GM12878 (cell line): ENCODE measurements at regions of chr20 and their contacts with region 1.

Region 1: DNA sequence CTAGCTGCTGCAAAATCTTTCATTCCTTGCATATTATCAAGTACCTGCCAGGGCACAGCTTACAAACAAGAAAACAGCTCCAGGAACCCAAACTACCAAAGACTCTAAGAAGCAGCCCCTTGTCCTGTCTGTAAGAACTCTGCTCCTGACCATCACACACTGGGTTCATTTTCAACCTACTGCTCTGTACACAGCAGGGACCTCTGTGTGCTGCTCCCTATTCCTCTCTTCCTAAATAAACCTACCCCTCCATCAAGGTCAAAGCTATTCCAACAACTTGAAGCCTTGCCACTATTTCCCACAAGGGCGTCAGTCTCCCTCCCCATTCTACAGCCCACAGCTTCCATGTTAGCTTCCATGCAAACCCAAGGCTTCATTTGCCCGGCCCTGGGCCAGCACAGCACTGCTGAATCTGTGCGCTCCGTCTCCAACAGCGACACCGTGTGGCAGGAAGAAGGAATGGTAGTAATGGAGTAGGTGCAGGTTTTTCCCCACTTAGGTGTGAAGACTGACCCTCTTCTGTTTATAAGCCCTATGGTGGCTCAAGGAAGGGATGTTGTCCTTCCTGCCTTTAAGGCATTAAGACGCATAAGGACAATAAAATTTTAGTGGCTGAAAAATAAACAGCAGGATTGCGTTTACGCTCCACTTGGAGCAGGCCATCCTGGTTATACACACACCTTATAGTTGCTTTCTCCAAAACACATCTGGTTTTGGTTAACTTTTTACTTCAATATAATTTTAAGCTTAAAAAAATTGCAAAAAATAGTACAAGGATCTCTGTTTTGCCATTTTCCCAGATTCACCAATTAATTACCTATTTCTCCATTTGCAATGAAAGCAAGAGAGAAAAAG is 115.2 kb upstream of the NXT1 start:
- DNase-seq: no peak
- ATAC-seq: peak; percentile 94
- H3K4me3 ChIP-seq: no peak overlapping the region
- H3K27ac ChIP-seq: no peak overlapping the region
- H3K4me1 ChIP-seq: no peaks in the 10 kb centered on the region
- H3K27me3 ChIP-seq: no peaks in the 10 kb centered on the region
- CTCF ChIP-seq: peak; percentile 74 to 77 (median 74)
- EP300 ChIP-seq: no peak
- POLR2A ChIP-seq: no peak
- RAD21 ChIP-seq: peak; percentile 91

Region 2: GRCh38 chr20:23245553-23246181 is 10.3 kb after region 1 on chr20:
- CTCF ChIA-PET with region 1: interaction called, 31 read pairs
- POLR2A ChIA-PET with region 1: no interaction called
- RAD21 ChIA-PET with region 1: interaction called, 4 read pairs
- SMC1A ChIA-PET with region 1: no interaction called
- in situ Hi-C with region 1: no loop called
- intact Hi-C with region 1: no loop called
- DNase-seq: peak; percentile 48
- ATAC-seq: peak; percentile 97
- H3K4me3 ChIP-seq: no peak overlapping the region
- H3K27ac ChIP-seq: no peak overlapping the region
- H3K4me1 ChIP-seq: peaks cover 24% of the 10 kb centered on the region
- H3K27me3 ChIP-seq: no peaks in the 10 kb centered on the region
- CTCF ChIP-seq: peak; percentile 71 to 77 (median 75)
- EP300 ChIP-seq: no peak
- POLR2A ChIP-seq: no peak
- RAD21 ChIP-seq: peak; percentile 56

Region 3: GRCh38 chr20:23282546-23282945 is 47.1 kb after region 1 on chr20:
- CTCF ChIA-PET with region 1: no interaction called
- POLR2A ChIA-PET with region 1: no interaction called
- RAD21 ChIA-PET with region 1: no interaction called
- SMC1A ChIA-PET with region 1: no interaction called
- in situ Hi-C with region 1: no loop called
- intact Hi-C with region 1: no loop called
- DNase-seq: no peak
- ATAC-seq: no peak
- H3K4me3 ChIP-seq: no peak overlapping the region
- H3K27ac ChIP-seq: no peak overlapping the region
- H3K4me1 ChIP-seq: no peaks in the 10 kb centered on the region
- H3K27me3 ChIP-seq: no peaks in the 10 kb centered on the region; a peak in 1 of 4 replicates
- CTCF ChIP-seq: no peak
- EP300 ChIP-seq: no peak
- POLR2A ChIP-seq: no peak
- RAD21 ChIP-seq: no peak

Region 4: DNA sequence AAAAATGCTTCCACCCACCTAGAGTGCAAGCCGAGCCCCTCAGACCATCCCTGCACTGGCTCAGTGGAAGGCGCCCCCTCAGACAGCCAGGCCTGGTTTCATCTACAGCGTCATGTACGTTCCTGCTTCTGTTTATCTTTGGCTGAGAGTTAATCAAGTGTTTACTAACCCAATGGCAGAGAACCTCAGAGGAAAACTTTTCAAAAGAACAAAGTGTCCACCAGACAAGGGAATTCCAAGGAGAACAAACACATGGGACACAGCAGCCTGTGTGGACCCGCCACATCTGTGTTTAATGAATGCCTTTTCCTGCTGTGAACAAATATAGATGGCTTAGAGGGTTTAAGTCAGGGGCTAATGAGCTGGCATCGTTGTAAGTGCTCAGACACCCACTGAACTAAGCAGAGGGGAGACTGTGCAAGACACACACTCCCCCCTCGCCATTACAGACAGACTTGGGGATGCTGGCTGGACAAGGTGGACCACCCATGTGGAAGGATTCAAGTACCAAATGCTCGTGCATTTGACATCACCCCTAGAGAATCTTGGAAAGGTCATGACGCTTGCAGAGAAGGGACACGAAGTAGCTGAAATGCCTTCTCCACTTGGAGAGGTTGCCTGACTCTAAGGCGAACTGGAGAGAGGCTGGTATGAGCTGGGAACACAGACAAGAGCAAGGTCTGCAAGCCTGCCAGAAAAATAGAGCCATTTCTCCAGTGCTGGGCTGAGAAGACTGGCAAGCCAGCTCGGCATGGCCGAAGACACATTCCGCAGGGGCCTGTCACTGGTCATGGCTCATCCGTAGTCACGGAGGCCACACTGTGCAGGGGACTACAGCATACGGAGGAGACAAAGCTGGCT is 61.7 kb after region 1 on chr20:
- CTCF ChIA-PET with region 1: no interaction called
- POLR2A ChIA-PET with region 1: no interaction called
- RAD21 ChIA-PET with region 1: no interaction called
- SMC1A ChIA-PET with region 1: no interaction called
- in situ Hi-C with region 1: no loop called
- intact Hi-C with region 1: no loop called
- DNase-seq: no peak
- ATAC-seq: no peak
- H3K4me3 ChIP-seq: no peak overlapping the region
- H3K27ac ChIP-seq: no peak overlapping the region
- H3K4me1 ChIP-seq: no peaks in the 10 kb centered on the region
- H3K27me3 ChIP-seq: peaks cover 0 to 2% of the 10 kb centered on the region in 2 experiments; a peak in 1 of 4 replicates
- CTCF ChIP-seq: no peak
- EP300 ChIP-seq: no peak
- POLR2A ChIP-seq: no peak
- RAD21 ChIP-seq: no peak